ENCODE measurements at regions of chr20 and their contacts with region 1.

Region 1: GRCh38 chr20:20052074-20052970 is at the starts of genes CFAP61 and CRNKL1:
- DNase-seq: peak; percentile 97 to 99 (median 98)
- H3K4me3 ChIP-seq: peak within 1 kb of the TSS; percentile 85 to 98
- H3K4me3 Mint-ChIP-seq: peak within 1 kb of the TSS; percentile 93 to 100 (median 99)
- H3K27ac ChIP-seq: peak within 1 kb of the TSS; percentile 81
- H3K27ac Mint-ChIP-seq: peak within 1 kb of the TSS; percentile 92 to 100 (median 99)
- H3K4me1 ChIP-seq: peaks cover 19% of the 10 kb centered on the region
- H3K4me1 Mint-ChIP-seq: peaks cover 16 to 25% (median 21%) of the 10 kb centered on the region in 4 donors
- H3K27me3 ChIP-seq: peaks cover 7% of the 10 kb centered on the region
- H3K27me3 Mint-ChIP-seq: peaks cover 0 to 4% of the 10 kb centered on the region in 2 donors
- total RNA-seq, gene CFAP61: not detected
- total RNA-seq, gene CRNKL1: 30.0 to 32.9 TPM

Region 2: GRCh38 chr20:19473922-19474286 is 578.4 kb before region 1 on chr20:
- CTCF ChIA-PET with region 1: no interaction called
- POLR2A ChIA-PET with region 1: no interaction called
- intact Hi-C with region 1: no loop called
- DNase-seq: no peak
- H3K4me3 ChIP-seq: no peak overlapping the region
- H3K4me3 Mint-ChIP-seq: no peak overlapping the region
- H3K27ac ChIP-seq: no peak overlapping the region
- H3K27ac Mint-ChIP-seq: no peak overlapping the region
- H3K4me1 ChIP-seq: no peaks in the 10 kb centered on the region
- H3K4me1 Mint-ChIP-seq: no peaks in the 10 kb centered on the region
- H3K27me3 ChIP-seq: no peaks in the 10 kb centered on the region
- H3K27me3 Mint-ChIP-seq: peaks cover 0 to 1% of the 10 kb centered on the region in 2 donors

Region 3: DNA sequence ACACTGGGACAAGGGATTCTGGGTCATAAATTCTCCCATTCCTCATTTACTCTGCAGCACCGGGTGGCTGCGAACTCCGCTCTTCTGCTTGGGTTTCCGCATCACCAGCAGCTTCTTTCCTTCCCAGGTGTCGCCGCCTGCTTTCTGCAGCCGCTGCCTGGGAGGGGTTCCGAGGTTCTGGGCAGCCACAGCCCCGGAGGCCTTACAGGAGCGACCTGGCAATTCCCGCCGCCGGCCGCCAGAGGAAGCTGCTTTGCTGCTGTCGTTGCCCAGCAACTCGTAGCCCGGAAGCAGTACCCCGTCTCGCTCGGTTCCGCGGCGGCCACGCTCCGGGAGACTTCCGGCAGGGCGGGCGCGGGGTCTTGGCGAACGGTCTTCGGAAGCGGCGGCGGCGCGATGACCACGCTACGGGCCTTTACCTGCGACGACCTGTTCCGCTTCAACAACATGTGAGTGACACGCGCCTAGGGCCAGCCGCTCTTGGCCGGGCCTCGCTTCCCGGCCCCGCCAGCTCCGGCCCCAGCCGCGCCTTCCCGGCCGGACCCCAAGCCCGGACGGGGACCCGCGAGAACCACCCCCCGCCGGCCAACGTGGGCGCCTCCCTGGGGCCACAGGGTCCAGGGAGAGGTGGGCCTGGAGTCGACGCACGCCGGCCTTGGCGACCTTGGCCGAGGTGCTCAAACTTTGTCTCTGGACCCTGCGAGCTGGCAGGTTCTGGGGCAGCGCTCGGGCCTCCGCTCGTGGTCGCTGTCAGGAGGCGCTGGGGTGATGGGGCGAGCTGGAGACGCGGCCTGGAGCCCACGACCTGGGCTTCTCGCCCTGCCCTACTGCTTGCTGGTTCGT is 35.1 kb before region 1 on chr20 and contains the start of gene NAA20:
- CTCF ChIA-PET with region 1: interaction called, 40 read pairs
- POLR2A ChIA-PET with region 1: interaction called, 84 read pairs
- intact Hi-C with region 1: loop called (anchors 1 kb)
- DNase-seq: peak; percentile 86 to 93 (median 88)
- H3K4me3 ChIP-seq: peak within 1 kb of the TSS; percentile 61 to 70
- H3K4me3 Mint-ChIP-seq: peak within 1 kb of the TSS; percentile 86 to 96 (median 94)
- H3K27ac ChIP-seq: peak within 1 kb of the TSS; percentile 85
- H3K27ac Mint-ChIP-seq: peak within 1 kb of the TSS; percentile 88 to 98 (median 94)
- H3K4me1 ChIP-seq: peaks cover 54% of the 10 kb centered on the region
- H3K4me1 Mint-ChIP-seq: peaks cover 35 to 58% (median 47%) of the 10 kb centered on the region in 4 donors
- H3K27me3 ChIP-seq: no peaks in the 10 kb centered on the region
- H3K27me3 Mint-ChIP-seq: no peaks in the 10 kb centered on the region
- total RNA-seq, gene NAA20: 32.5 to 33.5 TPM

Region 4: GRCh38 chr20:20027284-20027683 is 25.0 kb before region 1 on chr20:
- CTCF ChIA-PET with region 1: no interaction called
- POLR2A ChIA-PET with region 1: interaction called, 10 read pairs
- intact Hi-C with region 1: no loop called
- DNase-seq: no peak
- H3K4me3 ChIP-seq: no peak overlapping the region
- H3K4me3 Mint-ChIP-seq: no peak overlapping the region
- H3K27ac ChIP-seq: no peak overlapping the region
- H3K27ac Mint-ChIP-seq: no peak overlapping the region
- H3K4me1 ChIP-seq: no peaks in the 10 kb centered on the region
- H3K4me1 Mint-ChIP-seq: peaks cover 4 to 9% (median 7%) of the 10 kb centered on the region in 4 donors
- H3K27me3 ChIP-seq: no peaks in the 10 kb centered on the region
- H3K27me3 Mint-ChIP-seq: no peaks in the 10 kb centered on the region